ENCODE measurements at regions of chr5 and their contacts with region 1.

Region 1: DNA sequence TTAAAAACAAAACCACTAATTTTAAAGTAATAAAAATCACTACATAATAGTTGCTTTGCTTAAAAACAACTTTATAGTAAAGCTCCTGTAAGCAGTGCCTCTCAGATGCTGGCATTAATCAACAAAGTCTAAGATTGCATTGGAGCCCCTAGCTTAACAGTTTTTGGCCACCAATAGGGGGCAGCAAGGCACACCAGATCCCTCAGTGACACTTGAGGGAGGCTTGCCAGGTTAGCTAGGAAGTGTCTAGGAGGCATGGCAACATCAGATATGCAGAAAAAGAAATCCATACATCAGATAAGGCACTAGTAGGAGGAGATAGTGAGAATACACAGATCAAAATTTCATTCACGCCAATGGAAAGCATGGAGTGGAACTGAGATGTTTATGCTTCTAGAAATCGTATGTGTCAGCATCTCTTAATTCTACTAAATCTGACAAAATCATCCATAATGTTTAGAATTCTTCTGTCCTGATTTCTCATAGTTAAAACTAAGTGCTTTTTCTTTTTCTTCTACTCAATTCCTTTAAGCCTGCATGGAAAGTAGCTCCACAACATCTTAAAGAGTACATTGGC is 73.6 kb upstream of the PAM start:
- DNase-seq: peak; percentile 42 to 64
- H3K4me3 ChIP-seq: no peak overlapping the region
- H3K27ac ChIP-seq: no peak overlapping the region
- H3K4me1 ChIP-seq: no peaks in the 10 kb centered on the region
- H3K27me3 ChIP-seq: no peaks in the 10 kb centered on the region
- CTCF ChIP-seq: peak; percentile 86

Region 2: DNA sequence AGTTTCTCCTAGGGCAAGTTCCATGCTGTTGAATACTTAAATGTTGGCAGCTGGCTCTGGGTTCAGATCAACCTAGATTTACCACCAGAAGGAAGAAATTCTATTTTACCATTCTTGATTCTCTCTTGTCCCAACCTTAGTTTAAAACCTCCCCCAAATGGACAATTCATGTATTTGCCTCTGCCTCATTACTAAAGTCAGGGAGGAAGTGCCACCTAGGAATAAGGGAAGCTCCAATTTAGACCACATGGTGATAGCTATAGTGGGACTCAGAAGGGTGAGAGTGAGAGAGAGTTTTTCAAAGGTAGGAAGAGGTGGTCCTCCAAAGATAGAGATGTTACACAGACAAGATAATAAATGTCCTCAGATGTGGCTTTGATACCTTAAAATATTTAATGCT is 20.3 kb after region 1 on chr5:
- CTCF ChIA-PET with region 1: interaction called, 13 read pairs
- POLR2A ChIA-PET with region 1: no interaction called
- intact Hi-C with region 1: no loop called
- DNase-seq: no peak
- H3K4me3 ChIP-seq: no peak overlapping the region
- H3K27ac ChIP-seq: no peak overlapping the region
- H3K4me1 ChIP-seq: no peaks in the 10 kb centered on the region
- H3K27me3 ChIP-seq: no peaks in the 10 kb centered on the region
- CTCF ChIP-seq: no peak

Region 3: GRCh38 chr5:102755686-102756371 is 74.3 kb after region 1 on chr5:
- CTCF ChIA-PET with region 1: interaction called, 3 read pairs
- POLR2A ChIA-PET with region 1: no interaction called
- intact Hi-C with region 1: loop called (anchors 10 kb)
- DNase-seq: peak; percentile 72 to 85
- H3K4me3 ChIP-seq: peak overlapping the region; percentile 86
- H3K27ac ChIP-seq: peak overlapping the region; percentile 77
- H3K4me1 ChIP-seq: peaks cover 15% of the 10 kb centered on the region; the same call in 1 of the 2 replicates
- H3K27me3 ChIP-seq: no peaks in the 10 kb centered on the region
- CTCF ChIP-seq: no peak

Region 4: DNA sequence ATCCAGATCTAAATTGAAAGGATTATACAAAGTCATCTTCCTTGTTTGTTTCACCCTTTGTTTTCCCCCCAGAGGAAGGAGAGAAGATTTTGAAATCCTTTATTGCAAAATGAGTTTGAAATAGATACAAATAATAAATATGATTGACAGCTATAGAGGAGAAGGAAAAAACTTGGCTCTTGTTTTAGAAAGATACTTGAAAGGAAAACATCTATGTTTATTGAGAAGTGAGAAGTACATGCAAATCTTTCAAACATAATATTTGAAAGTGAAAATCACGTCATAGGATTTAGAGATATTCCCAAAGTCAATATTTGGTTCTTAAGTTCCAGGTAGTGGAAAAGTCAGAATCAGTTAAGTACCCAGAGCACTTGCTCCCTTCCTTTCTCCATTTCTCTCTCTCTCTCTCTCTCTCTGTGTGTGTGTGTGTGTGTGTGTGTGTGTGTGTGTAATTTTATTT is 100.8 kb after region 1 on chr5:
- CTCF ChIA-PET with region 1: no interaction called
- POLR2A ChIA-PET with region 1: no interaction called
- intact Hi-C with region 1: loop called (anchors 10 kb)
- DNase-seq: no peak
- H3K4me3 ChIP-seq: no peak overlapping the region
- H3K27ac ChIP-seq: no peak overlapping the region
- H3K4me1 ChIP-seq: peaks cover 5% of the 10 kb centered on the region; the same call in 1 of the 2 replicates
- H3K27me3 ChIP-seq: no peaks in the 10 kb centered on the region
- CTCF ChIP-seq: no peak

Region 5: GRCh38 chr5:102971697-102972293 is 290.3 kb after region 1 on chr5:
- CTCF ChIA-PET with region 1: no interaction called
- POLR2A ChIA-PET with region 1: no interaction called
- intact Hi-C with region 1: loop called (anchors 5 kb)
- DNase-seq: no peak
- H3K4me3 ChIP-seq: no peak overlapping the region
- H3K27ac ChIP-seq: no peak overlapping the region
- H3K4me1 ChIP-seq: no peaks in the 10 kb centered on the region
- H3K27me3 ChIP-seq: no peaks in the 10 kb centered on the region
- CTCF ChIP-seq: peak; percentile 43

Region 6: DNA sequence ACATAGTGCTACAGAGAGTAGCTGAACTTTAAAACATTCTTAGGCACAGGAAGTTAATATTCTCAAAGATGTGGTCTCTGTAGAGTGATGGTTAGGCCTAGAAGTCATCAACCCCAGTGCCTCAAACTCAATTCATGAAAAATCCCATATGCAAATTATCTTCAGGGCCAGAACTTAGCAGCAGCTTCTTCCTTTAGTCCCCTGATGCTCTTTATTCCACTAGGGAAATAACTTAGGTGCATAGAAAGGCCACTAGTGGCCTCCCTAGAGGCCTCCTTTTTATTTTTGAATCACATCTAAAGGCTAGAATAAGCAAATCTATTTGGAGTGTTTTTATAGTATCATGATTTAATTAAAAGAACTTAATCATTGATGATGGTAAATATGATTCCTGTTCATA is 350.1 kb after region 1 on chr5:
- CTCF ChIA-PET with region 1: no interaction called
- POLR2A ChIA-PET with region 1: no interaction called
- intact Hi-C with region 1: loop called (anchors 2 kb)
- DNase-seq: no peak
- H3K4me3 ChIP-seq: no peak overlapping the region
- H3K27ac ChIP-seq: no peak overlapping the region
- H3K4me1 ChIP-seq: 0 out of 2 replicates have a peak, but pooled peaks cover 1% of the 10 kb centered on the region
- H3K27me3 ChIP-seq: no peaks in the 10 kb centered on the region
- CTCF ChIP-seq: peak; percentile 51; the same call in 1 of the 2 replicates

Region 7: GRCh38 chr5:103057208-103058130 is 376.0 kb after region 1 on chr5:
- CTCF ChIA-PET with region 1: no interaction called
- POLR2A ChIA-PET with region 1: no interaction called
- intact Hi-C with region 1: no loop called
- DNase-seq: peak; percentile 15 to 61
- H3K4me3 ChIP-seq: no peak overlapping the region
- H3K27ac ChIP-seq: no peak overlapping the region
- H3K4me1 ChIP-seq: peaks cover 8% of the 10 kb centered on the region; the same call in 1 of the 2 replicates
- H3K27me3 ChIP-seq: no peaks in the 10 kb centered on the region
- CTCF ChIP-seq: no peak

Measured in PC-9 (cell line).